Activated CD8-positive, alpha-beta T cell treated with anti-CD3 and anti-CD28 coated beads for 36 hours (primary cell): ENCODE measurements at regions of chr13 and their contacts with region 1.

Region 1: GRCh38 chr13:25286969-25287961 is at the start of gene MTMR6:
- DNase-seq: peak; percentile 93
- ATAC-seq: peak; percentile 89
- H3K4me3 Mint-ChIP-seq: peak within 1 kb of the TSS; percentile 93
- H3K27ac Mint-ChIP-seq: peak within 1 kb of the TSS; percentile 95
- H3K4me1 Mint-ChIP-seq: peaks cover 32% of the 10 kb centered on the region
- H3K27me3 Mint-ChIP-seq: peaks cover 14% of the 10 kb centered on the region
- CTCF ChIP-seq: peak; percentile 98
- total RNA-seq, gene MTMR6: 10.7 to 11.3 TPM

Region 2: GRCh38 chr13:25118378-25118777 is 168.9 kb before region 1 on chr13:
- CTCF ChIA-PET with region 1: no interaction called
- POLR2A ChIA-PET with region 1: no interaction called
- intact Hi-C with region 1: no loop called
- DNase-seq: no peak
- ATAC-seq: no peak
- H3K4me3 Mint-ChIP-seq: no peak overlapping the region
- H3K27ac Mint-ChIP-seq: no peak overlapping the region
- H3K4me1 Mint-ChIP-seq: no peaks in the 10 kb centered on the region
- H3K27me3 Mint-ChIP-seq: peaks cover 15% of the 10 kb centered on the region
- CTCF ChIP-seq: no peak

Region 3: GRCh38 chr13:25276748-25277147 is 10.5 kb before region 1 on chr13:
- CTCF ChIA-PET with region 1: interaction called, 20 read pairs
- POLR2A ChIA-PET with region 1: interaction called, 13 read pairs
- intact Hi-C with region 1: no loop called
- DNase-seq: peak; percentile 40
- ATAC-seq: peak; percentile 86
- H3K4me3 Mint-ChIP-seq: no peak overlapping the region
- H3K27ac Mint-ChIP-seq: no peak overlapping the region
- H3K4me1 Mint-ChIP-seq: peaks cover 53% of the 10 kb centered on the region
- H3K27me3 Mint-ChIP-seq: no peaks in the 10 kb centered on the region
- CTCF ChIP-seq: no peak

Region 4: DNA sequence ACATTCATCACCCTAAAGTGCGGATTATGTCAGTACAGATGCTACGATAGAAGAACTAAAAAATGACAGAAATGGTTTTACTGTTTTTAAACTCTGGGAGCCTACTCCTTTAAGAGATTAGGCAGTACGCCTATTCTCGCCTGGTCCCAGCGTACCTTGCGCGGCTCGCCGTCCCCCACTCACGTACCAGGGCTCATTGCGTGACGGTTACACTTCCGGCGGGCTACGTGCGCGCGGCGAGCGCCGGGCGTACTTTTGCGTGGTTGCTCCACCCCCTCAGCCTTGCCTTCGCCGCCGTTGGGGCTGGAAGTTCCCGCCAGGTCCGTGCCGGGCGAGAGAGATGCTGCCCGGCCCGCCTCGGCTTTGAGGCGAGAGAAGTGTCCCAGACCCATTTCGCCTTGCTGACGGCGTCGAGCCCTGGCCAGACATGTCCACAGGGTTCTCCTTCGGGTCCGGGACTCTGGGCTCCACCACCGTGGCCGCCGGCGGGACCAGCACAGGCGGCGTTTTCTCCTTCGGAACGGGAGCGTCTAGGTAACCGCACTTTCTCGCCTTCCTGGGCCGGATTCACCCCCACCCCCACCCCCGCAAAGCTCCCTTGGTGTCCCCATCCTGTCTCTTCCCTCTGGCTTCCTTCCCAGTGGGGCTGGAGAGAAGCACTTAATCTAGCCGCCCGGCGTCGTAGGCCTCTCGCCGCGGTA is 14.2 kb after region 1 on chr13 and contains the start of gene NUP58:
- CTCF ChIA-PET with region 1: interaction called, 32 read pairs
- POLR2A ChIA-PET with region 1: interaction called, 18 read pairs
- intact Hi-C with region 1: loop called (anchors 2 kb)
- DNase-seq: peak; percentile 96
- ATAC-seq: peak; percentile 99
- H3K4me3 Mint-ChIP-seq: peak within 1 kb of the TSS; percentile 95
- H3K27ac Mint-ChIP-seq: peak within 1 kb of the TSS; percentile 94
- H3K4me1 Mint-ChIP-seq: peaks cover 35% of the 10 kb centered on the region
- H3K27me3 Mint-ChIP-seq: peaks cover 8% of the 10 kb centered on the region
- CTCF ChIP-seq: no peak
- total RNA-seq, gene NUP58: 140 to 171 TPM